Posterior vena cava (tissue), 2 donors: ENCODE measurements at regions of chr16 and their contacts with region 1.

Region 1: GRCh38 chr16:72455743-72456659 is 284.0 kb upstream of the PMFBP1 start:
- DNase-seq: no peak

Region 2: DNA sequence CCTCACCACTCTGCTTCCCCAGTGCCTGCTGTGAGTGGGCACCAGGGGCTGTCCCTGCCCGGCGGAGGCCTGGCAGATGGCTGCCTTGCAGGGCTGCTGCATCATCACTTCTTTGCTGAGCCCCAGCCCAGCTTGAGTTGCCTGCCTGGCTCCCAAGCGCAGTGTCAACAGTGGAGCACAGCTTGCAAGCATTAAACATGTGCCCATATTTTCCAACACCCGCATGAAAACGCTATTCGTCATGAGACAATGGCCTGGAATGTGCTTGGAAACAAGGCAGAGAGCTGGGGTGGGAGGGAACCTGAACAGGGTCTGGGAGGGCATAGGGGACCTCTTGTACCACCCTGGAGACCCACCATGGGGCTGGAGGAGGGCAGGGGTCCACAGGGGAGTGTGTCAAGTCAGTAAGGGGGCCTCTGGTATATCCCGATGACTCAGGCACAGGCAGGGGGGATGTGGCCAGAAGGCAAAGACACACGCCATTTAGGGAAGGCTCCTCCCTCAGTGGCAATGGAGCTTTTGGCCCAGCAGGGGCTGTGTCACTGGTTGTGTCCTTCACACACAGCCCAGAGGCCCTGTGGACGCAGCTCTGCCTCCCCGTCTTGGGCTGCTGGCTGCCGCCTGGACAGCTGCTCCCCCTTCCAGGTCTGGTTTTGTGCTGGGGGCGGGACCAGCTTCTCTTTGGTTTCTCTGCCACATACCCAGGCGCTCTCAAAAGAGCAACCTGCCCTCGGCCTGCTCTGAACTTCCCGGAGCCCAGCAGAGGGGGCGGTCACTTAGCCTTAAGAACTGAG is 1752.8 kb before region 1 on chr16:
- intact Hi-C with region 1: no loop called
- DNase-seq: peak; percentile 93

Region 3: GRCh38 chr16:72256398-72257054 is 199.5 kb before region 1 on chr16:
- intact Hi-C with region 1: loop called in 1 of 2 experiments (anchors 10 kb)
- DNase-seq: no peak

Region 4: GRCh38 chr16:72508191-72508590 is 52.2 kb after region 1 on chr16:
- intact Hi-C with region 1: loop called in 1 of 2 experiments (anchors 2 kb)
- DNase-seq: no peak